Activated T-helper 1 cell treated with anti-CD3 and anti-CD28 coated beads, Interleukin-12 subunit alpha, Interleukin-12 subunit beta, Interleukin-2, Interleukin-4 antibody, amounts not matched to agents 30 ng/mL and 10 ng/mL and 1 ng/mL, durations not matched to agents 14 hours and 24 hours and 36 hours (primary cell): ENCODE measurements at regions of chr1 and their contacts with region 1.

Region 1: GRCh38 chr1:179002552-179003345 is 22.9 kb upstream of the FAM20B start:
- DNase-seq: peak; percentile 27
- H3K4me3 Mint-ChIP-seq: no peak overlapping the region
- H3K27ac Mint-ChIP-seq: no peak overlapping the region
- H3K4me1 Mint-ChIP-seq: peaks cover 13% of the 10 kb centered on the region
- H3K27me3 Mint-ChIP-seq: peaks cover 5% of the 10 kb centered on the region

Region 2: DNA sequence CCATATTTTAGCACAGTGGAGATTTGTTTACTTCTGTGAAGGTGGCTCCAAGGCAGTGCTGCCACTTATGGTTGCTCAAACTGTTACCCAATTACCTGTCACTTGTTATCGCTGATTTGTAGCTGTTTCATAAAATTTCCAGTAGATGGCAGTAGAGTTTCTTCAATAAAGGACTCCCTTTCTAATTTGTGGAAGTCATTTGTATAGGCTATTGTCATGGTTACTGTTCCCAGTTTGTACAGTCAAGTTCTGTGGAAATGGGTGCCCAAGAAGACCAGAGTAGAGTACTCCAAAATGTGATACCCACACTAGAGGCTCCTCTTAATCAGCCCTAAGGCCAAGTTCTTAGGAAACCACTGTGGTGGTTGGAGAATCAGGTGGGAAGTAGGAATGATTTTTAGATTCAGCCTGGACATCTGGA is 692.1 kb before region 1 on chr1:
- intact Hi-C with region 1: loop called (anchors 5 kb)
- DNase-seq: no peak
- H3K4me3 Mint-ChIP-seq: no peak overlapping the region
- H3K27ac Mint-ChIP-seq: no peak overlapping the region
- H3K4me1 Mint-ChIP-seq: no peaks in the 10 kb centered on the region
- H3K27me3 Mint-ChIP-seq: peaks cover 4% of the 10 kb centered on the region

Region 3: DNA sequence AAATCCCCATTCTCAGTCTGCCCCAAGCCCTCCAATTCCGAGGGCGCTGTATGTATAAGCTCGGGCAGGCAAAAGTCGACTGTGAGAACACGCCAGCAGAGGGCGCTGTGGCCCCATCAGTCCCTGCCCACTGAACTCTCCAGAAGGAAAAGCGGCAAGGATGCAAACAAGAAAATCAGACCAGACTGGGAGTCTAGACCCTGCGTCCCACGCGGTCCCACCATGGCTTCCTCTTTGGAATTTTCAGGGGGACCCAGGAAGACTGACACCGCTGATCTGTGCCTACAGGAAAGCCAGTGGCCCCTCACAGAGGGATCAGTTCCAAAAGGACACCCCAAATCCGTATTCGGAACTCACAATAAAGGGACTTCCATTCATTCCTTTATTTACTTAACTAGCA is 470.4 kb before region 1 on chr1:
- intact Hi-C with region 1: loop called (anchors 1 kb)
- DNase-seq: peak; percentile 50
- H3K4me3 Mint-ChIP-seq: no peak overlapping the region
- H3K27ac Mint-ChIP-seq: no peak overlapping the region
- H3K4me1 Mint-ChIP-seq: peaks cover 7% of the 10 kb centered on the region
- H3K27me3 Mint-ChIP-seq: peaks cover 3% of the 10 kb centered on the region

Region 4: GRCh38 chr1:178768423-178768822 is 234.3 kb before region 1 on chr1:
- intact Hi-C with region 1: loop called (anchors 1 kb)
- DNase-seq: no peak
- H3K4me3 Mint-ChIP-seq: no peak overlapping the region
- H3K27ac Mint-ChIP-seq: no peak overlapping the region
- H3K4me1 Mint-ChIP-seq: no peaks in the 10 kb centered on the region
- H3K27me3 Mint-ChIP-seq: peaks cover 2% of the 10 kb centered on the region

Region 5: GRCh38 chr1:178774263-178774662 is 228.5 kb before region 1 on chr1:
- intact Hi-C with region 1: loop called (anchors 1 kb)
- DNase-seq: no peak
- H3K4me3 Mint-ChIP-seq: no peak overlapping the region
- H3K27ac Mint-ChIP-seq: no peak overlapping the region
- H3K4me1 Mint-ChIP-seq: no peaks in the 10 kb centered on the region
- H3K27me3 Mint-ChIP-seq: peaks cover 2% of the 10 kb centered on the region